ENCODE measurements at regions of chr20 and their contacts with region 1.

Region 1: GRCh38 chr20:32652739-32653526 is 20.8 kb downstream of the C20orf203 start:
- DNase-seq: peak; percentile 73 to 98 (median 90)

Region 2: DNA sequence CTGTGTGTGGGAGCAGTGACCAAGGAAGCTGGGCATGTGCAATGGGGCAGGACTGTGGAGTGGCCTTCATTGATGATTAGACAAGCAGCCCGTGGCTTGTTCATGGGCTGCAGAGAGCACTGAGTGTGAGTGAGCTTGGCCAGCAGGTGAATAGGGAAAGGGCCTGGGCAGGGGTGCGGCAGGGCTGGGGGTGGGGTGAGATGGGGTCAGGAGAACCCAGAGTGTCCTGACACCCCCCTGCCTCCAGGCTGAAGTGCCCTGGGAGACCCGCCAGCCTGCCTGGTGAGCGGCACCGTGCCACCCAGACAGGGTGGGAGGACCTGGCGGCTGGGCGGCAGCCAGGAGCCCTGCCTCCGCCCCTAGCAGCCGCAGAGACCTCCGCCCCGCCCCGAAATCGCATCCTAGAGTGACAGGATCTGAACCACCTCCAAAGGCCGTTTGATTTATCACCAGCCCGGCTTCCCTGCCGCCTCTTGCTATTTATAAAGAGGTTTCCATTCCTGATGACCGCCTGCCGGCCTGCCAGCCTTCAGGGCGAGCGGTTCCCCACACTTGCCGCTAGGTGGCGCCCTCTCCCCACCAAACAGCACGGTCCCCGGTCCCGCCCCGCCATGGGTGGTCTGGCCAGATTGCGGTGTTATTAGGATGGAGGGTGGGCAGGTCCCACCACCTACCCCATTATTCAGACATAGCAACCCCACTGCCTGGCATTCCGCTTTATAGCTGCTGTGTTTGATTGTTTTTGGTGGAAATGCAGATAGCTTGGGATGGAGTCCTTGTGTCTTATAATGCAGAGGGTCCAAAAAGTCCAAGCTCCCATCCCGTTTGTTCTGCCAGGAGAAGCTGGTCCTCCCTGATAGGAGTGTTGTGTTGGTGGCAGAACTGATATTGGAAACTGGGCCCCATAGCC is 830.3 kb before region 1 on chr20:
- intact Hi-C with region 1: loop called (anchors 10 kb)
- DNase-seq: peak; percentile 46 to 96 (median 78)

Region 3: GRCh38 chr20:32521780-32522525 is 131.0 kb before region 1 on chr20:
- intact Hi-C with region 1: loop called (anchors 1 kb)
- DNase-seq: peak; percentile 63 to 97 (median 80)

Region 4: GRCh38 chr20:32582659-32583580 is 70.0 kb before region 1 on chr20:
- intact Hi-C with region 1: loop called (anchors 5 kb)
- DNase-seq: peak in 2 of 10 donors; percentile 66 to 87